ENCODE measurements at regions of chr12 and their contacts with region 1.

Region 1: GRCh38 chr12:103868215-103868614 is 27.2 kb upstream of the NT5DC3 start:
- DNase-seq: no peak
- H3K4me3 ChIP-seq: no peak overlapping the region
- H3K27ac ChIP-seq: no peak overlapping the region
- H3K4me1 ChIP-seq: no peaks in the 10 kb centered on the region
- H3K27me3 ChIP-seq: peaks cover 0 to 3% of the 10 kb centered on the region in 2 experiments
- CTCF ChIP-seq: no peak
- POLR2A ChIP-seq: no peak

Region 2: DNA sequence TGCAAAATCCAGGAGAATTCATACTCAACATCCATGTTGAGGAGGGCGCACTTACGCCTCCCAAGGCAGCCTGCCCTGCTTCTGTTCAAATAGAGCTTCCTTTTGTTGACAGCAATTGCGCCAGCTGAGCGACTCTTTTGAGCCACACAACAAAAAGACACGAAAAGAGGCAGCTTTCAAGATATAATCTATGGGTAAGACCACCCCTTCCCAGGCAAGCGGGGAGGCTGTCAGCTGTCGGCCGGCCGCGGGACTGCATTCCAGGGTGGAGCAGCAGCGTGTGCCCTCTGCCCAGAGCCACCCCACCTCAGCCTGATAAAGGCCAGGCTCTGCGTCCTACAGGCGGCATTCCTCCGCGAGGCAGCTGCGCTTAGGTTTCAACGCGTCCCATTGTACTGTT is 296.9 kb before region 1 on chr12:
- CTCF ChIA-PET with region 1: interaction called, 14 read pairs
- POLR2A ChIA-PET with region 1: no interaction called
- dilution Hi-C with region 1: no loop called
- intact Hi-C with region 1: loop called (anchors 2 kb)
- DNase-seq: peak; percentile 13
- H3K4me3 ChIP-seq: no peak overlapping the region
- H3K27ac ChIP-seq: no peak overlapping the region
- H3K4me1 ChIP-seq: no peaks in the 10 kb centered on the region
- H3K27me3 ChIP-seq: peaks cover 7 to 13% of the 10 kb centered on the region in 2 experiments
- CTCF ChIP-seq: no peak
- POLR2A ChIP-seq: no peak

Region 3: GRCh38 chr12:103771466-103771865 is 96.7 kb before region 1 on chr12:
- CTCF ChIA-PET with region 1: interaction called, 165 read pairs
- POLR2A ChIA-PET with region 1: no interaction called
- dilution Hi-C with region 1: no loop called
- intact Hi-C with region 1: loop called (anchors 1 kb)
- DNase-seq: peak; percentile 46
- H3K4me3 ChIP-seq: no peak overlapping the region
- H3K27ac ChIP-seq: no peak overlapping the region
- H3K4me1 ChIP-seq: no peaks in the 10 kb centered on the region
- H3K27me3 ChIP-seq: no peaks in the 10 kb centered on the region
- CTCF ChIP-seq: peak; percentile 56 to 70
- POLR2A ChIP-seq: no peak